SK-N-SH (cell line): ENCODE measurements at regions of chr1 and their contacts with region 1.

Region 1: DNA sequence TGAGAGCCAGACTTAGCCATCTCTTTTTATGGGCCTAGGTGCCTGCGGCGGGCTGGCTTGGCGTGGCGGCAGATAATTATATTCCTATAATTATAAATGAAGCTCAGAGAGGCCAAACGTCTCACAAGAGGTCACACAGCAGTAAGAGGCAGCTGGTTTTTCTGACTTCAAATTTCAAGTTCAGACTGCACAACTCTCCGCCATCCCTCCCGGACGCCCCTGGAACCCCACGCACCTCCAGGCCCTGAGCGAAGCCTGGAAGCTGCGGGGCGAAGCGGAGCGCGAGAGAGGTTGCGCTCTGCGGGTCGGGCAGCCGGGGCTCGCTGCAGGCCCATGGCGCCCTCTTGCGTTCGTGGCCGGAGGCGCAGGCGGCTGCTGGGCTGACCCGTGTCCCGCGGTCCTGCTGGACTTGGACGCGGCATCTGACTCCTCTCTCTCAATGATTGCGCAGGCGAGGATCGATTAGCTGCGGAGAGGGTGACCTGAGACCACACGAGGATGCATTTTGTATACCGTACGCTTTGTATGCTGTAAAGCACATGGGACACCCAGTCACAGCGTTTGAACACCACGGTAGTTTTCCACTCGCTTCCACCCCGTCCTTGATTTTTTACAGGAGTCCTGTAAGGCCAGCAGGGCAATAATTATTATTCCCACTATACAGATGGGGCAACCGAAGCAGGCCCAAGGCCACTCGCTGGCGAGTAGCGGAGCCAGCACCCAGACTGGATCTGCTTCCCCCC is 272.7 kb downstream of the FOXD2 start:
- DNase-seq: peak; percentile 96
- H3K4me3 ChIP-seq: peak overlapping the region in 1 of 2 experiments; percentile 58; a peak in 1 of 4 replicates
- H3K27ac ChIP-seq: no peak overlapping the region
- H3K4me1 ChIP-seq: peaks cover 0 to 23% of the 10 kb centered on the region in 2 experiments; a peak in 1 of 4 replicates
- H3K27me3 ChIP-seq: peaks cover 68% of the 10 kb centered on the region
- CTCF ChIP-seq: peak; percentile 93
- EP300 ChIP-seq: no peak
- RAD21 ChIP-seq: peak; percentile 92

Region 2: GRCh38 chr1:47388891-47389238 is 321.6 kb before region 1 on chr1:
- CTCF ChIA-PET with region 1: interaction called, 20 read pairs
- POLR2A ChIA-PET with region 1: no interaction called
- DNase-seq: peak; percentile 80
- H3K4me3 ChIP-seq: no peak overlapping the region
- H3K27ac ChIP-seq: no peak overlapping the region
- H3K4me1 ChIP-seq: peaks cover 0 to 10% of the 10 kb centered on the region in 2 experiments; a peak in 1 of 4 replicates
- H3K27me3 ChIP-seq: no peaks in the 10 kb centered on the region
- CTCF ChIP-seq: peak; percentile 69
- EP300 ChIP-seq: no peak
- RAD21 ChIP-seq: peak; percentile 84

Region 3: DNA sequence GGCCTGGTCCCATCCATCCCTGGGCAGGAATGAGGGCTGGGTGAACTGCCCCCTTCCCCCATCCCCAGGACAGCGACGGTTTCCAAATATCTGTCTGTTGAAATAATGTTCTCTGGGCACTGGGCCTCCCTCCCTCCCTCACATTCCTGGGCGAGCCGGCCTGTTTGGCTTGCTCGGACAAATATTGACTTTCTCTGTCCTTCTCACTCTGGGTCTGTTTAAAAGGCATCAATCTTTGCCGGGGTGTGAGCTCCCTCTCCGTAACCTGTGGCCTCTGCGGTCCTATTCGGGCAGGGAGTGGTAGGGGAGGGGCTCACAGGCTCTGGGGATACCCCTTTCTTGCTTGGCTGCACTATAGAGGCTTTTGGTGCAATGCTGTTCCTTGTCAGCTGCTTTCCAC is 232.4 kb before region 1 on chr1:
- CTCF ChIA-PET with region 1: interaction called, 12 read pairs
- POLR2A ChIA-PET with region 1: no interaction called
- DNase-seq: no peak
- H3K4me3 ChIP-seq: no peak overlapping the region
- H3K27ac ChIP-seq: no peak overlapping the region
- H3K4me1 ChIP-seq: peaks cover 0 to 5% of the 10 kb centered on the region in 2 experiments; a peak in 1 of 4 replicates
- H3K27me3 ChIP-seq: no peaks in the 10 kb centered on the region; the same call in 1 of the 2 replicates
- CTCF ChIP-seq: no peak
- EP300 ChIP-seq: no peak
- RAD21 ChIP-seq: no peak

Region 4: GRCh38 chr1:47521034-47521881 is 189.2 kb before region 1 on chr1:
- CTCF ChIA-PET with region 1: interaction called, 27 read pairs
- POLR2A ChIA-PET with region 1: no interaction called
- DNase-seq: no peak
- H3K4me3 ChIP-seq: no peak overlapping the region
- H3K27ac ChIP-seq: no peak overlapping the region
- H3K4me1 ChIP-seq: no peaks in the 10 kb centered on the region
- H3K27me3 ChIP-seq: no peaks in the 10 kb centered on the region
- CTCF ChIP-seq: no peak
- EP300 ChIP-seq: no peak
- RAD21 ChIP-seq: no peak

Region 5: GRCh38 chr1:47547753-47548573 is 162.5 kb before region 1 on chr1:
- CTCF ChIA-PET with region 1: interaction called, 11 read pairs
- POLR2A ChIA-PET with region 1: no interaction called
- DNase-seq: no peak
- H3K4me3 ChIP-seq: no peak overlapping the region
- H3K27ac ChIP-seq: no peak overlapping the region
- H3K4me1 ChIP-seq: no peaks in the 10 kb centered on the region; a peak in 1 of 4 replicates
- H3K27me3 ChIP-seq: no peaks in the 10 kb centered on the region
- CTCF ChIP-seq: no peak
- EP300 ChIP-seq: no peak
- RAD21 ChIP-seq: no peak

Region 6: GRCh38 chr1:47611992-47612391 is 98.5 kb before region 1 on chr1:
- CTCF ChIA-PET with region 1: no interaction called
- POLR2A ChIA-PET with region 1: no interaction called
- DNase-seq: no peak
- H3K4me3 ChIP-seq: no peak overlapping the region
- H3K27ac ChIP-seq: no peak overlapping the region
- H3K4me1 ChIP-seq: no peaks in the 10 kb centered on the region
- H3K27me3 ChIP-seq: no peaks in the 10 kb centered on the region
- CTCF ChIP-seq: no peak
- EP300 ChIP-seq: no peak
- RAD21 ChIP-seq: no peak

Region 7: DNA sequence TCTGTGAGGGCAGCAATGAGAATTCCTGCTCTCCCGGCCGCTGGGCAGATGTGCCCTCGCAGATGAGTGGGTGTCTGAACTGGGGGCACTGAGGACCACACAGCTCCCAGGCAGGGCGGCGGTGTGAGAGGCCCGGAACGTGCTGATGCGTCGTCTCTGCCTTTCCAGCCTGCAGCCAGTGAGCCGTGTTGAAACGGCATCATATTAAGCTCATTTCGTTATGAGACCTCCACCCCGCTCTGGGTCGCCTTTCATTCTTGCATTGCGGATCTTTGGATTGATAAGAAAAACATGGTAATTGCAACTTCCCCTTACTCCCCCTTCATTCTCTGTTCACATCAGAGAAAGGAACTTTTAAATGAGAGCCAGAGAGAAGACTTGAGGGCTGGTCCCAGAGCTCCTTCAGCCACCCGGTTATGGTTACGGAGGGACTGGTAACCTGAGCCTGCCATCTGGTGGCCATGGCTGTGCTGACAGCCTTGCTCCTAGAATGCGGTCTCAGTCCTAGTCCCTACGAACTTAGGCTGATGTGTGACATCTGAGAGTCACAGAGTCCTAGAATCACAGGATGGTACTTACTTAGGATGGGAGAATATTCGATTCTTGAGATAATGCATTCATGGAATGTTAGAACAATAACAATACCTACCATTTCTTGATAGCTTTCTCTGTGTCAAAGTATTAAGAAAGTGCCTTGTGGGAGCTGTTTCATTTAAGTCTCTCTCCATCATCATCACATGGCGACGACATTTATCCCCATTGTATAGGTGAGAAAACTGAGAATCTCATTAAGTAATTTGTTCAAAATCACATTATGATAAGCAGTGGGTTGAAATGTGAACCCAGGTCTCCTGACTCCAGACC is 15.7 kb after region 1 on chr1:
- CTCF ChIA-PET with region 1: interaction called, 269 read pairs
- POLR2A ChIA-PET with region 1: no interaction called
- DNase-seq: peak; percentile 89
- H3K4me3 ChIP-seq: peak overlapping the region; percentile 15 to 57; a peak in 3 of 4 replicates
- H3K27ac ChIP-seq: no peak overlapping the region
- H3K4me1 ChIP-seq: peaks cover 0 to 9% of the 10 kb centered on the region in 2 experiments; a peak in 1 of 4 replicates
- H3K27me3 ChIP-seq: peaks cover 28% of the 10 kb centered on the region
- CTCF ChIP-seq: peak; percentile 87
- EP300 ChIP-seq: no peak
- RAD21 ChIP-seq: peak; percentile 87